Activated B cell treated with CpG ODN at 0.5 μM for 24 hours (primary cell): ENCODE measurements at regions of chr12 and their contacts with region 1.

Region 1: GRCh38 chr12:121579981-121580868 is 598 bp downstream of the KDM2B start:
- DNase-seq: peak; percentile 60
- ATAC-seq: peak; percentile 52
- H3K4me3 Mint-ChIP-seq: peak overlapping the region; percentile 95
- H3K27ac Mint-ChIP-seq: peak overlapping the region; percentile 95
- H3K4me1 Mint-ChIP-seq: peaks cover 45% of the 10 kb centered on the region
- H3K27me3 Mint-ChIP-seq: no peaks in the 10 kb centered on the region
- CTCF ChIP-seq: no peak

Region 2: GRCh38 chr12:121560392-121561008 is 19.7 kb before region 1 on chr12:
- CTCF ChIA-PET with region 1: interaction called, 11 read pairs
- POLR2A ChIA-PET with region 1: interaction called, 232 read pairs
- intact Hi-C with region 1: loop called (anchors 1 kb)
- DNase-seq: peak; percentile 58
- ATAC-seq: peak; percentile 79
- H3K4me3 Mint-ChIP-seq: peak overlapping the region; percentile 84
- H3K27ac Mint-ChIP-seq: peak overlapping the region; percentile 97
- H3K4me1 Mint-ChIP-seq: peaks cover 55% of the 10 kb centered on the region
- H3K27me3 Mint-ChIP-seq: no peaks in the 10 kb centered on the region
- CTCF ChIP-seq: no peak

Region 3: GRCh38 chr12:121663610-121663929 is 83.3 kb after region 1 on chr12:
- CTCF ChIA-PET with region 1: no interaction called
- POLR2A ChIA-PET with region 1: interaction called, 20 read pairs
- intact Hi-C with region 1: no loop called
- DNase-seq: no peak
- ATAC-seq: no peak
- H3K4me3 Mint-ChIP-seq: peak overlapping the region; percentile 90
- H3K27ac Mint-ChIP-seq: peak overlapping the region; percentile 92
- H3K4me1 Mint-ChIP-seq: peaks cover 49% of the 10 kb centered on the region
- H3K27me3 Mint-ChIP-seq: no peaks in the 10 kb centered on the region
- CTCF ChIP-seq: no peak

Region 4: DNA sequence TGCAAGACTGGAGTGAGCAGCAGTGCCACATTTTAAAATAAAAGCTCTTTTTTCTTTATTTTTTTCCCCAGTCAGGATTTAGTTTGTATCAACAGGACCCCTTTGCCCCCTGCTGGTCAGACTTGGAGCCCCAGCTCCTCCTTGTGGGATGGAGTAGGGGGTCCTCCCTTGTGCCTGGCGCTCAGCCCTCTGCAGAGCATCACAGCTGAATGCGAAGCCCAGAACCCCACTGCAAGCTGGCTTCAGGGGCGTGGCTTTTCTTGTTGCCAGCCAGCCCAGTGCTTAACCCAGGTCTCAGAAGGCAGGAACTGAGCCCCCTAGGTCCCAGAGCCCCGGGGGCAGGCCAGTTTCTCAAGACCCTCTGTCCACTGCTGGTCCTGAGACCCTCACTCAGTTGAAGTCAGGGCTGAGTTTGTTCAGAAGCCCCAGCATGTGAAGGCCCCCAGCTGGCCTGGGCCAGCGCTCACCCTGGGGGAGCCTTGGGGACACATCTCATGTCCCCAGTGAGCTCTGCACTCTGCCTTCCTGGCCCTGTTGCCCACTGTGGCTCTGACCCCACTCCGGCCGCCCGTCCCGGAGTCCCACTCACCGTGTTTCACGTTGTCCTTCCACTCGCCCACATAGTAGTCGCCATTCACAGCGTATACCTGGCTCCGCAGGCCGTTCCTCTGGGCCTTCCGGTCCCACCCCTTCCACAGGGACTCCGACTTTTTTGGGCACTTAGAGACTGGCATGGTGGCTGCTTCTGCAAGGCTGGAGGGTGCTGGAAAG is 88.7 kb after region 1 on chr12:
- CTCF ChIA-PET with region 1: no interaction called
- POLR2A ChIA-PET with region 1: interaction called, 20 read pairs
- intact Hi-C with region 1: no loop called
- DNase-seq: peak; percentile 38
- ATAC-seq: no peak
- H3K4me3 Mint-ChIP-seq: no peak overlapping the region
- H3K27ac Mint-ChIP-seq: peak overlapping the region; percentile 14
- H3K4me1 Mint-ChIP-seq: peaks cover 49% of the 10 kb centered on the region
- H3K27me3 Mint-ChIP-seq: no peaks in the 10 kb centered on the region
- CTCF ChIP-seq: no peak